ENCODE measurements at regions of chr11 and their contacts with region 1.

Region 1: GRCh38 chr11:2846056-2846455 is 39.5 kb downstream of the CDKN1C start:
- DNase-seq: no peak
- H3K4me3 ChIP-seq: no peak overlapping the region
- H3K27ac ChIP-seq: no peak overlapping the region
- H3K4me1 ChIP-seq: no peaks in the 10 kb centered on the region
- H3K27me3 ChIP-seq: no peaks in the 10 kb centered on the region
- CTCF ChIP-seq: no peak
- POLR2A ChIP-seq: no peak

Region 2: DNA sequence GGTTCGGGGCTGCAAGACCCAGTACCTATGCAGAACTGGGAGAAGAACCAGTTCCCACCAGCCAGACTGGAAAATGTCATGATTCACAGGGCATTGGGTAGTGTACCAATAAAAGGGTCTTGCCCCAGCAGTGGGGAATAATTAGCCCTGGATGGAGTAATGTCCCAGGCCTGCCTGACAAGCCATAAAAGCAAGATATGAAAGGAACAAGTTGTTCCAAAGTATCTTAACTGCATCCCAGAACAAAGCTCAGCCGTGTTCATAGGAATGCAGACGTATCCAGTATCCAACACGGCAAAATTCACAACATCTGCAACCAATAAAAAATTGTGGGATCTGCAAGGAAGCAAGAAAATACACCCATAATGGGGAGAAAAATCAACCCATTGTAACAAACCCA is 623.6 kb before region 1 on chr11:
- intact Hi-C with region 1: no loop called
- DNase-seq: no peak
- H3K4me3 ChIP-seq: no peak overlapping the region
- H3K27ac ChIP-seq: no peak overlapping the region
- H3K4me1 ChIP-seq: no peaks in the 10 kb centered on the region
- H3K27me3 ChIP-seq: no peaks in the 10 kb centered on the region
- CTCF ChIP-seq: no peak
- POLR2A ChIP-seq: no peak

Region 3: DNA sequence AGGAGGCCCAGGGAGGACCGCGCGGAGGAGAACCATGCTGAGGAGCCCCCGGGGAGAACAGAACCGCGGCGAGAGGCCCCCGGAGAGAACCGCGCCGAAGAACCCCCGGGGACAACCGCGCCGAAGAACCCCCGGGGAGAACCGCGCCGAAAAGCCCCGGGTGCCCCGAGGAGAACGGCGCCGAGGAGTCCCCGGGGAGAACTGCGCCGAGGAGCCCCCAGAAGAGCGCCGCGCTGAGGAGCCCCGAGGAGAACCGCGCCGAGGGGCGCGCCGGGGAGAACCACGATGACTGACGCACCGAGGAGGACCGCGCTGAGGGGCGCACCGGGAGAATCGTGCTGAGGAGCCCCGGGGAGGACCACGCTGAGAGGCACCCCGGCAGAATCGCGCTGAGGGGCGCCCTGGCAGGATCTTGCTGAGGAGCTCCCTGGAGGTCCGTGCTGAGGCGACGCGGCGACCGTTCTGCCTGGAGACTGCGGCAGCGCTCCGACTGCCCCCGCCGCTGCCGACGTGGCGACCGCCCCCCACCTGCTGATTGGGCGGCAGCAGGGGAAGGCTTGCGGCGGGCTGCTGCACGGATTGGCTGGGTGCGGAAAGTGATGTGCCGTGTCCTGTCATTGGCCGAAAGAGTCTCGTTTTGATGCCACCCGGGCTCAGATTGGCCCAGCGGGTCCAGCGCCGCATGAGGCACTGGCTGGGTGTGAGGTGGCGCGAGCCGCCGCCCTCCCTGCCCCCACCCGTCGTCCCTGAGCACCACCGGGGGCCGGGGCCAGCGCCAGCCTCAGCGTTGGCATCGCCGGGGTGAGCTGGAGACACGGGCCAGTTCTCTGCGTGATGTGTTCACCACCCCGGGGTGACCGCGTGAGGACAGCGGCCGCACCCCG is 146.3 kb before region 1 on chr11 and contains the start of gene KCNQ1OT1:
- intact Hi-C with region 1: loop called (anchors 5 kb)
- DNase-seq: peak; percentile 91 to 94
- H3K4me3 ChIP-seq: peak within 1 kb of the TSS; percentile 64 to 74 (median 72)
- H3K27ac ChIP-seq: peak within 1 kb of the TSS; percentile 88 to 98
- H3K4me1 ChIP-seq: no peaks in the 10 kb centered on the region
- H3K27me3 ChIP-seq: no peaks in the 10 kb centered on the region
- CTCF ChIP-seq: no peak
- POLR2A ChIP-seq: peak; percentile 85
- total RNA-seq, gene KCNQ1OT1: 2.1 to 5.3 (median 3.6) TPM

Region 4: GRCh38 chr11:2778630-2779498 is 67.2 kb before region 1 on chr11:
- intact Hi-C with region 1: loop called (anchors 10 kb)
- DNase-seq: peak; percentile 67 to 81
- H3K4me3 ChIP-seq: peak overlapping the region in 2 of 3 donors; percentile 15 to 32
- H3K27ac ChIP-seq: peak overlapping the region; percentile 76 to 77
- H3K4me1 ChIP-seq: peaks cover 0 to 5% of the 10 kb centered on the region in 2 donors
- H3K27me3 ChIP-seq: no peaks in the 10 kb centered on the region
- CTCF ChIP-seq: peak in 1 of 3 donors; percentile 57
- POLR2A ChIP-seq: no peak

Region 5: DNA sequence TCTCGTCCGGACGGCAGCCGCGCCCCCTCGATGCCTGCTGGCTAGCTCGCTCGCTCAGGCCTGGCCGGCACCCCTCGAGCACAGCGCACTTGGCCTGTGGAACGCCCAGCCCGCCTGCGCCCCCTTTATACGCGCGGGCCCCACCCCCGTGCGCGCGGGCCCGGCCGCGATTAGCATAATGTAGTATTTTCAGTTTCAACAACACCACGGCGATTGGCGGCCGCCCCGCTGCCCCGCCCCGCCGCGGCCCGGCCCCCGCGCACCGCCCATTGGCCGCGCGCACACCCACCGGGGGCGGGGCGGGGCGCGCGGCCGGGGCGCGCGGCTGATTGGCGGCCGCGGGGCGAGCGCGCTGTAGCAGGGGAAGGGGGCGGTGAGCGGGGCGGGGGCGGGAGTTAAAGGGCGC is 39.6 kb after region 1 on chr11 and contains the start of gene CDKN1C:
- intact Hi-C with region 1: no loop called
- DNase-seq: peak; percentile 86 to 88
- H3K4me3 ChIP-seq: peak within 1 kb of the TSS; percentile 70 to 98 (median 89)
- H3K27ac ChIP-seq: peak within 1 kb of the TSS; percentile 86 to 95
- H3K4me1 ChIP-seq: peaks cover 4 to 9% of the 10 kb centered on the region in 2 donors
- H3K27me3 ChIP-seq: no peaks in the 10 kb centered on the region
- CTCF ChIP-seq: no peak
- POLR2A ChIP-seq: peak; percentile 70
- total RNA-seq, gene CDKN1C: 48.2 to 136 (median 88.8) TPM

Measured in breast epithelium (tissue), 4 donors.